ENCODE measurements at regions of chr2 and their contacts with region 1.

Region 1: DNA sequence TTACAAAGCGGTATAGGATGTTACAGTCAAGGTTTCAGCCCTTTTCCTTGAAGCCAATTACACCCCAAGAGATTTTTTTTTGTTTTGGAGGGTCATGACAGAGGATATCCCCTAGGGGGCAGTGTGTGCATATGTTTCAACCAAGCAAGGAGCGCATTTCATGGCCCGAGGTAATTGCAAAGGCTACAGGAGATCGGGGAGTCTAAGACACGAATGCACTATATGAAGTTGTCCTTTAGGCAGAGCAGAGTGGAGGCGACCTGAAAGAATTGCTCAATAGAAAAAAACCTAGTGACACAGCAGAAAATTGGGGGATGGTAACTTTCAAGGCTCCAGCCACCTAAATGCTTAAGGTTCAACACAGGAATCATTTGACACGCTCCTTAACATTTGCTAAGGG is 219.8 kb upstream of the PARD3B start:
- ATAC-seq: peak; percentile 85 to 100 (median 98)
- H3K4me3 ChIP-seq: no peak overlapping the region
- H3K27ac ChIP-seq: no peak overlapping the region
- H3K4me1 ChIP-seq: peaks cover 0 to 23% of the 10 kb centered on the region in 2 donors

Region 2: GRCh38 chr2:203706403-203706802 is 619.1 kb before region 1 on chr2 and contains the start of gene CD28:
- in situ Hi-C with region 1: no loop called
- ATAC-seq: no peak
- H3K4me3 ChIP-seq: no peak within 1 kb of the TSS
- H3K27ac ChIP-seq: no peak within 1 kb of the TSS
- H3K4me1 ChIP-seq: no peaks in the 10 kb centered on the region
- total RNA-seq, gene CD28: 0.05 to 0.33 (median 0.09) TPM in 6 of 8 experiments, not detected in the others

Region 3: DNA sequence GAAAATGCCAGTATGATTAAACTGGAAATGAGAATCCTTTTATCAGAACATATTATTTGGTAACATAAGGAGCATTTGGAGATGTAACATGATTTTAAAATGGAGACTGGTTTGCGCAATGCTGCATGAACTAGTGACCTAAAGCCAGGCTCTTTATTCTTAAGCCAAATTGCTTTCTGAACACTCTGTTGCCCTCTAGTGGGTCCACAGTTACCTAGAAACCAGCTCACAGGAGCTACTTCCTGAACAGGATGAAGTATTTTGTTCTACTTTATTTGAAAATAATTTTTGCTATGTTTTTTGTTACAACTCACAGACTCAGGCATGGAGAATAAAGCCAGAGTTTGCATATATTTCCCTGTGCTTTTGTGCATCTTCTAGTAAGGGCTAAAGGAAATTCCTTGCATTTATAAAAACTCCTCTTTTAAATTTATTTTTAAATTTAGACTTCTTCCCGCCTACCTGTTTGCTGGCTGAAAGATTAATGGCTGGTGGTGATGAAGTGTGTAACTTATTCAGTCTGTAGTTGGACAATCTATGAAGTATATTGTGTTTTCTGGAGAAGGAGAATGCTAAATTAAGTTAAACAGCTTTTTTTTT is 366.5 kb after region 1 on chr2:
- in situ Hi-C with region 1: loop called in 4 of 9 experiments (anchors 25 kb)
- ATAC-seq: peak; percentile 67 to 96 (median 81)
- H3K4me3 ChIP-seq: no peak overlapping the region
- H3K27ac ChIP-seq: no peak overlapping the region
- H3K4me1 ChIP-seq: peaks cover 0 to 2% of the 10 kb centered on the region in 2 donors

Region 4: GRCh38 chr2:204871231-204871953 is 545.9 kb after region 1 on chr2:
- in situ Hi-C with region 1: loop called in 1 of 9 experiments (anchors 25 kb)
- ATAC-seq: peak in 4 of 8 experiments; percentile 50 to 66 (median 60)
- H3K4me3 ChIP-seq: no peak overlapping the region
- H3K27ac ChIP-seq: no peak overlapping the region
- H3K4me1 ChIP-seq: no peaks in the 10 kb centered on the region

Region 5: GRCh38 chr2:205947621-205948495 is 1622.4 kb after region 1 on chr2:
- in situ Hi-C with region 1: loop called in 1 of 9 experiments (anchors 25 kb)
- ATAC-seq: peak; percentile 65 to 88 (median 82)
- H3K4me3 ChIP-seq: no peak overlapping the region
- H3K27ac ChIP-seq: no peak overlapping the region
- H3K4me1 ChIP-seq: peaks cover 7 to 10% of the 10 kb centered on the region in 2 donors